ENCODE measurements at regions of chr4 and their contacts with region 1.

Region 1: DNA sequence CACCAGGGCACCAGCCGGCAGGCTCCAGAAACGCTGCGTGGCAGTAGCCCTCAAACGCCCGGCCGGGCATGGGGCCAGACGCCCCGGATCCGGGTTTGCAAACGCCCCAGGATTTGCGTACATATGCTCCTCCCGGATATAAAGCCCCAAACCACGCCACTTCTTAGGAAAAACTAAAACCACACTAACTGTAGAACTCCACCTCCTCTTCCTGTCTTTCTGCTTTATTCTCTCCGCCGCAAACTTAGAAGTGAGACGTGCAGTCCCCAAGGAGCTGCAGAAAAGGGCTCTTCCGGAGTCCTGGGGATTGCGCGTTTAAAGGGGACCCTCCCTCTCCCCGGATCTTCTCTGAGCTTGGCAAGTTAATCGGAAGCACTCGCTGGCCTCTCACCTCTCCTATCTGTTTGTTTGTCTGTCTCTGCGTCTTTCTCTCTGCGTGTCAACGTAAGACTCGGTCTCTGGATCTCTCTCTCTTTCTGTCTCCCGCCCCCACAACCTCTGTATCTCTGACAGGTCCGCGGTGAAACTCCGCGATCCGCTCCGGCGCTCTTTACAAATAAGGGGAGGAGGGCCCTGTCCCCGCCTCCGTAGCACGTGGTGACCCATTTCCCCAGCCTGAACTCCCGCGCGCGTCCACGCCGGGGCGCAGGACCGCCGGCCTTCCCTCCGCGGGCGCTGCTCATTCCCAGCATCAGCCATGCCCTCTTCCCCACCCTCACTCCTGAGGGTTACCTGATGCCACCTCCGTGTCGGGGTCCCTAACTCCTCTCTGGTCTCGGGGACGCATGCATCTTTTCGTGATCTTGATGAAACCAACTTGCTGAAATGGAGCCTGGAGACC is at the start of gene SLC39A8:
- DNase-seq: peak; percentile 78 to 85 (median 82)
- H3K4me3 ChIP-seq: peak within 1 kb of the TSS; percentile 81 to 94 (median 84)
- H3K4me3 Mint-ChIP-seq: peak within 1 kb of the TSS; percentile 98 to 99
- H3K27ac ChIP-seq: peak within 1 kb of the TSS; percentile 24 to 74
- H3K27ac Mint-ChIP-seq: peak within 1 kb of the TSS; percentile 90 to 98 (median 93)
- H3K4me1 ChIP-seq: peaks cover 25 to 31% of the 10 kb centered on the region in 2 donors
- H3K4me1 Mint-ChIP-seq: peaks cover 40% of the 10 kb centered on the region
- H3K27me3 ChIP-seq: no peaks in the 10 kb centered on the region
- H3K27me3 Mint-ChIP-seq: peaks cover 0 to 6% (median 0%) of the 10 kb centered on the region in 3 donors
- CTCF ChIP-seq: peak; percentile 94
- polyA plus RNA-seq, gene SLC39A8: 1.8 to 7.8 (median 6.1) TPM

Region 2: DNA sequence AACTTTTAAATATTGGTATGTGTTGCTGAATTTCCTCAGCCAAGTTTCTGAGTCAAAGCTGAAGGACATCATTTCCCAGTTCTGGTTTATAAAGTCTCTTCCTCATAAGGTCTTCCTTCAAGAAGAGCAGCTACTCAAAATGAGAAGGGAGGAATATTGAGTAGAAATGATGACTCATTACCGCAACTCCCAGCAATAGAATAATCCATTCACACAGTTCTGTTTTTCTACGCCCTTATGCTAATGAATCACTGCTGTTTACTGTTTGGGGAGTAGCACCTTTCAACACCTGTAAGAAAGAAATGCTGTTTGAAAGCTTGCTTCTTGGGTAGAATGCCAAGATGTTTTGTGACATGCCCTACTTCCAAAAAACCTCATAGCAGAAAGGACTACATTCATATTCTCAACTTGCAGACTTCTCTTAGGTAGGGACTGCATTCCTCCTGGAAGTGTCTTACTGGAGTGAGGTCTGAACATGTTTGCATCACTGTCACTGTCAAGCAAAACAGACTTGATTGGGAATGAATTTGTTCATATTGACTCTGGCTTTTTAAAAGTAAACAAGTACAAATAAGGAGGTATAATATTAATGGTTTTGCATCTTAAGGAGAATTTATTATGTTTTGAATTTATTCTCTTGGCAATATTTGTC is 701.9 kb before region 1 on chr4:
- intact Hi-C with region 1: no loop called
- DNase-seq: peak in 1 of 3 donors; percentile 11
- H3K4me3 ChIP-seq: no peak overlapping the region
- H3K4me3 Mint-ChIP-seq: no peak overlapping the region
- H3K27ac ChIP-seq: no peak overlapping the region
- H3K27ac Mint-ChIP-seq: no peak overlapping the region
- H3K4me1 ChIP-seq: no peaks in the 10 kb centered on the region
- H3K4me1 Mint-ChIP-seq: no peaks in the 10 kb centered on the region
- H3K27me3 ChIP-seq: no peaks in the 10 kb centered on the region
- H3K27me3 Mint-ChIP-seq: peaks cover 0 to 2% (median 0%) of the 10 kb centered on the region in 3 donors
- CTCF ChIP-seq: no peak

Region 3: DNA sequence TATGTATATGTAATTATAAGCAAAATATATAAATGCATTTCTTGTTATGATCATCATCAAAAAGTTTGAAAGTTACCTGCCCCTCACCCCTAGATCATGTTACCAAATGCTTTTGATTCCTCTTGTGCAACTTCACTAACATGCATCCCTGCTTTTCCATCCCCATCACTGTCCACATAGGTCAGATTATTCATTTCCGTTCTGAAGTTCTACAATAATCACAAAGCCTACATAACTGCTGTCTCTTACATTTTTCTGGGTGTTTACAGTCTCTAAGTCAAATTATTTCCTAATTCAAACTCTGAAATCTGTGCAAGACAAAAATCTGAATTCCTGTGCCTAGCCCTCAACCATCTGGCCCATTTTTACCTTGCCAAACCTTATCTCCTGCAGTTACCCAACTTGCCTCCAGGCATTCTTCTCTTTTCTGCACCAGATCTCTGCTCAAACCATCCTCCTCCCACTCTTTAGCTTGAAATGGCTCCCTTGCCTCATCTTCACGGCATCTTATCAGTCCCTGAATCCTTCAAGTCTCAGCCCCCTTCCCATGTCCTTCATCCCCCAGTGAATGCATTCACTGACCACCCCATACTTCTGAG is 42.5 kb after region 1 on chr4:
- intact Hi-C with region 1: loop called in 1 of 2 experiments (anchors 5 kb)
- DNase-seq: no peak
- H3K4me3 ChIP-seq: no peak overlapping the region
- H3K4me3 Mint-ChIP-seq: no peak overlapping the region
- H3K27ac ChIP-seq: no peak overlapping the region
- H3K27ac Mint-ChIP-seq: no peak overlapping the region
- H3K4me1 ChIP-seq: peaks cover 12 to 21% of the 10 kb centered on the region in 2 donors
- H3K4me1 Mint-ChIP-seq: peaks cover 24% of the 10 kb centered on the region
- H3K27me3 ChIP-seq: peaks cover 0 to 4% of the 10 kb centered on the region in 2 donors
- H3K27me3 Mint-ChIP-seq: peaks cover 0 to 6% (median 4%) of the 10 kb centered on the region in 3 donors
- CTCF ChIP-seq: no peak

Region 4: DNA sequence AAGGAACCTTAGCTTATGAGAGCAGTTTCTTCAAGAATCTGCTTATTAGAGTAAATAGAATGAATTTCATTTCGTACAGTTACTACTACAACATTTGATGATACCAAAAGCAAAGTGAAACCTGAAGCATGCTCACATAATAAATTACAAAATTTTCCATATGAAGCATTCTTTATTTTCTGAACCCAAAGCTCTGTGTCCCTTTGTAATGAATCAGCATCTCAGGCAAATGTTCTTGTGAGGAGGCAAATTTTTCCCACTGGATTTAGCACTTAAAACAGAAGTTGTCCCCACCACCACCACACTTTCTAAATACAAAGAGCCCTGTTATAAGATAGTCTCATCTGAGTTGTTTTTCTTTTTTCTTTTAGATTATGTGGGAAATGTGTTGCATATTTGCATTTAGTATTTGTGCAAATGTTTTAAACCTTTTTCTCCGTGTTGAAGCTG is 85.3 kb after region 1 on chr4:
- intact Hi-C with region 1: loop called (anchors 5 to 10 kb)
- DNase-seq: no peak
- H3K4me3 ChIP-seq: peak overlapping the region; percentile 63 to 79 (median 77)
- H3K4me3 Mint-ChIP-seq: peak overlapping the region; percentile 88 to 92
- H3K27ac ChIP-seq: peak overlapping the region in 1 of 2 donors; percentile 56
- H3K27ac Mint-ChIP-seq: peak overlapping the region in 3 of 7 donors; percentile 72 to 93 (median 79)
- H3K4me1 ChIP-seq: peaks cover 4 to 9% of the 10 kb centered on the region in 2 donors
- H3K4me1 Mint-ChIP-seq: peaks cover 6% of the 10 kb centered on the region
- H3K27me3 ChIP-seq: no peaks in the 10 kb centered on the region
- H3K27me3 Mint-ChIP-seq: peaks cover 2 to 5% (median 5%) of the 10 kb centered on the region in 3 donors
- CTCF ChIP-seq: no peak

Region 5: DNA sequence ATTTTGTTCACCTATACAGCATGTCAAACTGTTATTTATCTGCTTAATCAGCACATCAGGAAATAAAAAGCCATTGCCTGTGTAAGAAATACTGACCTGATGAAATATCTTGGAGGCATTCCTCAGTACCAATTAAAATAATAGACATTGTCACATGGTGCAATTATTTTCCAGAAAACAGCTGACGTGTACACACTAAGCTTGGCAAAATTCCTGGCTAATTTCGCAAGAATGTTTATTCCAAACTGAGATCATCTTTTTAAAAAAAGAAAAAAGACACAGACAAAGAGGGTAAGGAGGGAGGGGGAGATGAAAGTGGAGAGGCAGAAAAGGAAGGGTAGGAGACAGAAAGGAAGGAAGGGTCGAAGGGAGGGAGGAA is 94.1 kb after region 1 on chr4:
- intact Hi-C with region 1: loop called in 1 of 2 experiments (anchors 10 kb)
- DNase-seq: peak in 1 of 3 donors; percentile 71
- H3K4me3 ChIP-seq: no peak overlapping the region
- H3K4me3 Mint-ChIP-seq: no peak overlapping the region
- H3K27ac ChIP-seq: no peak overlapping the region
- H3K27ac Mint-ChIP-seq: no peak overlapping the region
- H3K4me1 ChIP-seq: no peaks in the 10 kb centered on the region
- H3K4me1 Mint-ChIP-seq: peaks cover 10% of the 10 kb centered on the region
- H3K27me3 ChIP-seq: no peaks in the 10 kb centered on the region
- H3K27me3 Mint-ChIP-seq: peaks cover 0 to 2% (median 0%) of the 10 kb centered on the region in 3 donors
- CTCF ChIP-seq: no peak